ENCODE measurements at regions of chr11 and their contacts with region 1.

Region 1: GRCh38 chr11:34263440-34264172 is 94.2 kb downstream of the ABTB2 start:
- DNase-seq: no peak
- ATAC-seq: peak; percentile 52

Region 2: GRCh38 chr11:34180040-34180813 is 83.4 kb before region 1 on chr11:
- intact Hi-C with region 1: loop called (anchors 5 kb)
- DNase-seq: no peak
- ATAC-seq: no peak

Measured in sciatic nerve (tissue), 2 donors.